ENCODE measurements at regions of chr16 and their contacts with region 1.

Region 1: GRCh38 chr16:58733671-58734458 is at the start of gene GOT2:
- DNase-seq: peak; percentile 83
- H3K4me3 Mint-ChIP-seq: peak within 1 kb of the TSS; percentile 95
- H3K27ac Mint-ChIP-seq: peak within 1 kb of the TSS; percentile 84
- H3K4me1 Mint-ChIP-seq: peaks cover 42% of the 10 kb centered on the region
- H3K27me3 Mint-ChIP-seq: no peaks in the 10 kb centered on the region
- total RNA-seq, gene GOT2: 156 to 162 TPM

Region 2: DNA sequence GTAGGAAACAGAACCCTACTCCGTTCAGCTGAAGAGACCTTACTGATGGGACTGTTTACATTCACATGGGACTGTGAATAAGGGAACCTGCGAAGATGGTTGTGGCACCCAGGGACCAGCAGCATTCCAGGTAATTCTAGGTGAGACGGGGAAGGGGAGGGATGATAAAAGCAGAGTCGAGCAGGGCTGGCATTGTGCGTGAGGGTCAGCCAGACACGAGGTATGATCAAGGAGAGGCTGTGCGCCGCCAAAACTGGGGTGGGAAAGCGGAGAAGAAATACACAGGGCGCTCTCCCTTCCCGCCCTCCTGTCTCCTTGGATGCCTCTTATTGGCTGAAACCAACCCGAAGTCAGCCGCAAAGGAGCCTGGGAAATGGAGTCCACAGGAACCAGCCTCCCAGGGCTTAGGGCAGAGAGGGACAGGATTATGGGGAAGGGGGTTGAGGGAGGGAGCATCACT is 497.6 kb before region 1 on chr16:
- CTCF ChIA-PET with region 1: no interaction called
- intact Hi-C with region 1: loop called (anchors 5 kb)
- DNase-seq: peak; percentile 84
- H3K4me3 Mint-ChIP-seq: peak overlapping the region; percentile 86
- H3K27ac Mint-ChIP-seq: no peak overlapping the region
- H3K4me1 Mint-ChIP-seq: peaks cover 5% of the 10 kb centered on the region
- H3K27me3 Mint-ChIP-seq: peaks cover 11% of the 10 kb centered on the region

Region 3: GRCh38 chr16:58249780-58250478 is 483.9 kb before region 1 on chr16:
- CTCF ChIA-PET with region 1: no interaction called
- intact Hi-C with region 1: no loop called
- DNase-seq: peak; percentile 82
- H3K4me3 Mint-ChIP-seq: peak overlapping the region; percentile 85
- H3K27ac Mint-ChIP-seq: no peak overlapping the region
- H3K4me1 Mint-ChIP-seq: peaks cover 6% of the 10 kb centered on the region
- H3K27me3 Mint-ChIP-seq: peaks cover under 1% of the 10 kb centered on the region

Region 4: DNA sequence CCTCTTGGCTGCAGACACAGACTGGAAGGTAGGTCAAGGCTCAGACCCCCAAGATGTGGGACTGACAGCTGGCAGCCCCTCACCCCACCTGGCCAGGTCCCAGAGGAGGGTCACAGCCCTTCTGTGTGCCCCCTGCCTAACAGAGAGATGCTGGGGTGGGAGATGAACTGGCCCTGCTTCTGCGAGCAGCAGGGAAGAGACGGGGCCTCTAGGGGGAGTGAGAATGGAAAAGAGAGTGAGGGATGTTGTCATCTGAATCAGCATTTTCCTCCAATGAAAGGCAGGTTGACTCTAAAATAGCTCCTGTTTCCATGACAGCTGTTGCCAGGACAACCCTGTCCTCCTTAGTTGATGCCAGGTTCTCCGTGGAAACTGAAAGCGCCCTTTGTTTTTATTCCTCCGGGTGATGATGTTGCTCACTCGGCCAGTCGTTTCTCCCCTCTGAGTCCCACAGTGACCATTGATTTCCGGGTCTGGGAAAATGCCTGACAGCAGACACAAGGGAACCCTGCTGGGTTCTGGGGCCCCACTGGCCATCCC is 238.8 kb before region 1 on chr16:
- CTCF ChIA-PET with region 1: no interaction called
- intact Hi-C with region 1: loop called (anchors 1 kb)
- DNase-seq: peak; percentile 94
- H3K4me3 Mint-ChIP-seq: no peak overlapping the region
- H3K27ac Mint-ChIP-seq: no peak overlapping the region
- H3K4me1 Mint-ChIP-seq: peaks cover 9% of the 10 kb centered on the region
- H3K27me3 Mint-ChIP-seq: no peaks in the 10 kb centered on the region

Region 5: DNA sequence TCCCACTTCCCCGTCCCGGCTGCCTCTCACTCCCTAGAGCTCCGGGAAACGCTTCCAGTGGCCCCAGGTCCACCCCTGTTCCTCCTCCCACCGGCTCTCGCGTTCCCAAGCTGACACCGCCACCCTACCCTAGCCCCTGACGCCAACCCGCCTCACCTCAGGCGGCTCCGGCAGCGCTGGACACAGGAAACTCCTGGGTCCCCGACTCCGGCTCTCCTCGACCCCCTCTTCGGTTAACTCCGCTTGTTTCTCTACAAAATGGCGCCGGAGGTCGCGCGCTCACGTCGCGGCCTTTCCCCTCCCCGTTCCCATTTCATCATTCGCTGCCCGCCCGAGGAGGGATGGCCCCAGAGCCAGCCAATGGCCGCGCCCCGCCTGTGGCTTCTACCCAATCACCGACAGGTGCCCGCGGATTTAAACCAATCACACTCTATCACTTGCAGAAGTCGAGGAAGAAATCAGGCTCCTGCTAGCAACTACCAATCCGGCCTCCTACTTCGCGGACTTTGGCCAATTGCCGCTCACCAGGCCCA is 104.2 kb before region 1 on chr16 and contains the start of gene CNOT1:
- CTCF ChIA-PET with region 1: no interaction called
- intact Hi-C with region 1: loop called (anchors 1 kb)
- DNase-seq: peak; percentile 99
- H3K4me3 Mint-ChIP-seq: peak within 1 kb of the TSS; percentile 99
- H3K27ac Mint-ChIP-seq: peak within 1 kb of the TSS; percentile 100
- H3K4me1 Mint-ChIP-seq: peaks cover 25% of the 10 kb centered on the region
- H3K27me3 Mint-ChIP-seq: peaks cover 1% of the 10 kb centered on the region
- total RNA-seq, gene CNOT1: 283 to 287 TPM

Region 6: GRCh38 chr16:58652461-58653140 is 81.3 kb before region 1 on chr16:
- CTCF ChIA-PET with region 1: no interaction called
- intact Hi-C with region 1: no loop called
- DNase-seq: no peak
- H3K4me3 Mint-ChIP-seq: no peak overlapping the region
- H3K27ac Mint-ChIP-seq: no peak overlapping the region
- H3K4me1 Mint-ChIP-seq: no peaks in the 10 kb centered on the region
- H3K27me3 Mint-ChIP-seq: no peaks in the 10 kb centered on the region

Region 7: GRCh38 chr16:58699151-58699550 is 34.7 kb before region 1 on chr16:
- CTCF ChIA-PET with region 1: no interaction called
- intact Hi-C with region 1: no loop called
- DNase-seq: no peak
- H3K4me3 Mint-ChIP-seq: no peak overlapping the region
- H3K27ac Mint-ChIP-seq: no peak overlapping the region
- H3K4me1 Mint-ChIP-seq: peaks cover 4% of the 10 kb centered on the region
- H3K27me3 Mint-ChIP-seq: no peaks in the 10 kb centered on the region

Region 8: DNA sequence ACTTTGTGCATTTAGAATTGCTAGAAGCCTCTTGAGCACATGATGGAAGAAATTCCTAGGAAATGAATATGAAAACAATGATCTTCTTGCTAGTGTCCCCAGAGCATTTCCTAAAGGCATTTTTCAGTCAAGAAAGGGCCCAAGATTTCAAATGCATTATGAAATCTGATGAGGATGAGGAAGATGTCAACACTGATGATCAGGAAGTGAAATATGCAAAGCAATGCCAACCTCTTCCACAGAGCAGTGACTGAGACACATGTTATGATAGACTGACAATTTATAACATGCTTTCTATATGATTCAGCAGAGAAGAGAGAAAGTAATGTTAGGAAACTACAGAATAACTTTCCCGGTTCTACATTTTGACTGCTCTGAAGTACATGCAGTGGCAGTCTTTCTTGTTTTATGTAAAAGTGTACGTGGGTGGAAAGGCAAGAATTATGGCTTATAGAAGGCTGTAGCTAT is 859.4 kb after region 1 on chr16:
- CTCF ChIA-PET with region 1: no interaction called
- intact Hi-C with region 1: loop called (anchors 5 kb)
- DNase-seq: peak; percentile 5
- H3K4me3 Mint-ChIP-seq: no peak overlapping the region
- H3K27ac Mint-ChIP-seq: no peak overlapping the region
- H3K4me1 Mint-ChIP-seq: peaks cover 14% of the 10 kb centered on the region
- H3K27me3 Mint-ChIP-seq: peaks cover 12% of the 10 kb centered on the region

Measured in activated naive CD4-positive, alpha-beta T cell treated with anti-CD3 and anti-CD28 coated beads for 36 hours (primary cell).